ENCODE measurements at regions of chr13 and their contacts with region 1.

Region 1: DNA sequence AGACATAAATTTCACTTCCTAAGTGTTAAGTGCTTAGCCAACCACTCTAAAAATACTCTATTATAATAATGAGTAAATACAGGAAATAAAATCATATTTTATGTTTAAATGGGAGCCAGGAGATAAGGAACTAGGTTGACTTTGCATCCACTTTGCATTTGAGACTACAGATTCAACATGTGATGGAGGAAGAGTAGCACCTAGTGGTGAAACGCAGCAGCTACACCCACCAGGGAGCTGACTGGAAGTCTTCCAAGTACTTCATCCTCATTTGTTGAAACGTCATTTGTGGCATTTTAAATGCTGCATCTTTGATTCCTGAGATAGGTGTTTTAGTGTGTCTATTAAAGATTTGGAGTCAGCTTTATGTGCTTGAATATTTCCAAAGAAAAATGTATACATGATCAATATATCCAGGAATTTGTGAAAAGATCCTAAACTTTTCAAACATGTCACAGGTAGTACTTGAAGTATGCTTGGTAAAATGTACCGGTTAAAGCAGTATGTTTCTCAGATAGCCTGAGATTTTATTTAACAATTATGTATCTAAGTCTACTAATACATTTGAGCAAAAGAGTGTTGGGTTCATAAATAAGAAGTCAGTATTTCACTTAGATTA is 17.4 kb upstream of the KCTD12 start:
- DNase-seq: peak in 1 of 2 donors; percentile 39
- ATAC-seq: peak; percentile 64 to 85 (median 72)
- H3K4me3 ChIP-seq: no peak overlapping the region
- H3K27ac ChIP-seq: no peak overlapping the region
- H3K4me1 ChIP-seq: no peaks in the 10 kb centered on the region
- H3K27me3 ChIP-seq: no peaks in the 10 kb centered on the region
- CTCF ChIP-seq: peak; percentile 99

Region 2: DNA sequence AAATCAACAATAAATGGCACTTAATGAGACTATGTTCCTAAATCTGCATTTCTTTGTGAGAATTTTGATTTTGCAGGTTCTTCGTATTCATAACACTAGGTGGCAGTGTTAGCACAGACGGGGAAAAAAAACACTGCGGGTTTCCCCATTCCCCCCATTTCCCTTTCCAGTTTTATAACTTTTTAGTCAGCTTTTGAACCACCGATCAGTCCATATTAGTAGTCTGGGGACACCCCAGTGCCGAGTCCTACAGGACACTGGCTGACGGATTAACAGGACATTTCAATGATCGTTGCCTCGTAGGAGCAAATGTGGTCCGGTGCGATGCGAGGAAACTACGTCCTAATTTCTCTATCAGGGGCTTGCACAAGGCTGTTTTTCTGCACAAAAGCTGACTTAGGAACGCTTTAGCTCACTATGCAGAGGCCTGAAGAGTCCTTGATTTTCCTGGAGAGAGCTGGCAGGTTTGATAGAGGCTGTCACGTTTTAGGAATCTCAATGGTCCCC is 1033.2 kb before region 1 on chr13:
- intact Hi-C with region 1: loop called (anchors 2 kb)
- DNase-seq: no peak
- ATAC-seq: peak; percentile 18 to 56 (median 30)
- H3K4me3 ChIP-seq: peak overlapping the region; percentile 54
- H3K27ac ChIP-seq: no peak overlapping the region
- H3K4me1 ChIP-seq: no peaks in the 10 kb centered on the region
- H3K27me3 ChIP-seq: no peaks in the 10 kb centered on the region
- CTCF ChIP-seq: peak; percentile 72

Region 3: GRCh38 chr13:75993823-75994222 is 909.8 kb before region 1 on chr13:
- intact Hi-C with region 1: no loop called
- DNase-seq: no peak
- ATAC-seq: no peak
- H3K4me3 ChIP-seq: no peak overlapping the region
- H3K27ac ChIP-seq: no peak overlapping the region
- H3K4me1 ChIP-seq: no peaks in the 10 kb centered on the region
- H3K27me3 ChIP-seq: no peaks in the 10 kb centered on the region
- CTCF ChIP-seq: no peak

Measured in psoas muscle (tissue), 8 donors.